ENCODE measurements at regions of chr3 and their contacts with region 1.

Region 1: GRCh38 chr3:19866751-19867347 is 67.2 kb downstream of the EFHB start:
- DNase-seq: no peak
- ATAC-seq: peak; percentile 71
- H3K4me3 Mint-ChIP-seq: no peak overlapping the region
- H3K27ac Mint-ChIP-seq: no peak overlapping the region
- H3K4me1 Mint-ChIP-seq: peaks cover 3% of the 10 kb centered on the region
- H3K27me3 Mint-ChIP-seq: peaks cover 3% of the 10 kb centered on the region
- CTCF ChIP-seq: no peak

Region 2: DNA sequence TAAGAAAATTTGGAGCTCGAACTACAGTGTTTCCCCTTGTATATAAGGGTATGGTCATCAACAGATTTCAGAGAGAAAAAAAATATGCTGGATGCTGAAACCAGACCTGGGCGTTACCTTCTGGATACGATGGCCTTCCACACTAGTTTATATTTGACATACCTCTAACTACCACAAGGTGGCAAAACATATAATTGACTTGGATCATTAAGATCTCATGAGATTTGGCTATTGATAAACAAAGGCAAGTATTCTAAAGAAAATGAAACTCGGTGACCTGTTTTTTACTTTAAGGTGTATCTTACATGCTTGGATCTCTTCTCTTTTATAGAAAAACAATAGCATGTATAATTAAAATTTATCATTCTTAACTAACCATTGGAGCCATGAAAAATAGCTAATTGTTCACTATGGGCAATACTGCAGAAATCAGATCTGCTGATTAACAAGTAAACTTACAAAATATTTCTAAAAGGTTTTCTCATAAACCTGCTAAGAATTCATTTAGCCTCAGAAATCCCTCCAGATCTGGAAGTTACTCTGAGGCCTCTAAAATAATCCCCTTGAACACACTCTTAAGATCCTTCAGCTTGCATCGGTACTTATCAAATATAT is 1019.2 kb before region 1 on chr3:
- CTCF ChIA-PET with region 1: interaction called, 20 read pairs
- POLR2A ChIA-PET with region 1: no interaction called
- intact Hi-C with region 1: no loop called
- DNase-seq: no peak
- ATAC-seq: no peak
- H3K4me3 Mint-ChIP-seq: no peak overlapping the region
- H3K27ac Mint-ChIP-seq: no peak overlapping the region
- H3K4me1 Mint-ChIP-seq: peaks cover 11% of the 10 kb centered on the region
- H3K27me3 Mint-ChIP-seq: no peaks in the 10 kb centered on the region
- CTCF ChIP-seq: no peak

Region 3: DNA sequence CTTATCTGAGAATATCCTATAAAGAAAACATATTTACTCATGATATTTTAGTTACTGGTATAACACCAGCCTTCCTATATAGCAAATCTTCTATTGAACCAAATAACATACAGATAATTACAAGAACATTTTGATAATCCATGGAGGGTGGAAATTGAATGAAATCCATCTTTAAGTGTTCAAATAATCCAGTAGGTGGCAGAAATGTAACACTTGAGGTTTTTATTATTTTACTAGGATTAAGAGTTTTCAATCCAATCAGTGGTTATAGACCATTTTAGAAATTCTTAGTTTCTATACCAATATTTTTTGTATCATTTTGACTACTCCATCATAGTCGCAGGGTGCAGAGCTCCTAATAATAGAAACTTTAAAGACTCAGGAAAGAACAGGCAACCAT is 820.4 kb before region 1 on chr3:
- CTCF ChIA-PET with region 1: interaction called, 12 read pairs
- POLR2A ChIA-PET with region 1: no interaction called
- intact Hi-C with region 1: no loop called
- DNase-seq: no peak
- ATAC-seq: no peak
- H3K4me3 Mint-ChIP-seq: no peak overlapping the region
- H3K27ac Mint-ChIP-seq: no peak overlapping the region
- H3K4me1 Mint-ChIP-seq: no peaks in the 10 kb centered on the region
- H3K27me3 Mint-ChIP-seq: no peaks in the 10 kb centered on the region
- CTCF ChIP-seq: no peak

Region 4: GRCh38 chr3:19065027-19065426 is 801.8 kb before region 1 on chr3:
- CTCF ChIA-PET with region 1: interaction called, 22 read pairs
- POLR2A ChIA-PET with region 1: no interaction called
- intact Hi-C with region 1: loop called (anchors 1 kb)
- DNase-seq: no peak
- ATAC-seq: no peak
- H3K4me3 Mint-ChIP-seq: no peak overlapping the region
- H3K27ac Mint-ChIP-seq: no peak overlapping the region
- H3K4me1 Mint-ChIP-seq: no peaks in the 10 kb centered on the region
- H3K27me3 Mint-ChIP-seq: no peaks in the 10 kb centered on the region
- CTCF ChIP-seq: no peak

Region 5: GRCh38 chr3:19146685-19147650 is 719.9 kb before region 1 on chr3:
- CTCF ChIA-PET with region 1: interaction called, 18 read pairs
- POLR2A ChIA-PET with region 1: no interaction called
- intact Hi-C with region 1: loop called (anchors 1 kb)
- DNase-seq: peak; percentile 64
- ATAC-seq: peak; percentile 73
- H3K4me3 Mint-ChIP-seq: peak overlapping the region; percentile 95
- H3K27ac Mint-ChIP-seq: peak overlapping the region; percentile 85
- H3K4me1 Mint-ChIP-seq: peaks cover 14% of the 10 kb centered on the region
- H3K27me3 Mint-ChIP-seq: peaks cover 9% of the 10 kb centered on the region
- CTCF ChIP-seq: no peak

Region 6: GRCh38 chr3:19213601-19214220 is 653.1 kb before region 1 on chr3:
- CTCF ChIA-PET with region 1: interaction called, 39 read pairs
- POLR2A ChIA-PET with region 1: no interaction called
- intact Hi-C with region 1: loop called (anchors 1 kb)
- DNase-seq: no peak
- ATAC-seq: peak; percentile 74
- H3K4me3 Mint-ChIP-seq: no peak overlapping the region
- H3K27ac Mint-ChIP-seq: no peak overlapping the region
- H3K4me1 Mint-ChIP-seq: peaks cover 4% of the 10 kb centered on the region
- H3K27me3 Mint-ChIP-seq: no peaks in the 10 kb centered on the region
- CTCF ChIP-seq: no peak